Lower leg skin (tissue), 4 donors: ENCODE measurements at regions of chr11 and their contacts with region 1.

Region 1: DNA sequence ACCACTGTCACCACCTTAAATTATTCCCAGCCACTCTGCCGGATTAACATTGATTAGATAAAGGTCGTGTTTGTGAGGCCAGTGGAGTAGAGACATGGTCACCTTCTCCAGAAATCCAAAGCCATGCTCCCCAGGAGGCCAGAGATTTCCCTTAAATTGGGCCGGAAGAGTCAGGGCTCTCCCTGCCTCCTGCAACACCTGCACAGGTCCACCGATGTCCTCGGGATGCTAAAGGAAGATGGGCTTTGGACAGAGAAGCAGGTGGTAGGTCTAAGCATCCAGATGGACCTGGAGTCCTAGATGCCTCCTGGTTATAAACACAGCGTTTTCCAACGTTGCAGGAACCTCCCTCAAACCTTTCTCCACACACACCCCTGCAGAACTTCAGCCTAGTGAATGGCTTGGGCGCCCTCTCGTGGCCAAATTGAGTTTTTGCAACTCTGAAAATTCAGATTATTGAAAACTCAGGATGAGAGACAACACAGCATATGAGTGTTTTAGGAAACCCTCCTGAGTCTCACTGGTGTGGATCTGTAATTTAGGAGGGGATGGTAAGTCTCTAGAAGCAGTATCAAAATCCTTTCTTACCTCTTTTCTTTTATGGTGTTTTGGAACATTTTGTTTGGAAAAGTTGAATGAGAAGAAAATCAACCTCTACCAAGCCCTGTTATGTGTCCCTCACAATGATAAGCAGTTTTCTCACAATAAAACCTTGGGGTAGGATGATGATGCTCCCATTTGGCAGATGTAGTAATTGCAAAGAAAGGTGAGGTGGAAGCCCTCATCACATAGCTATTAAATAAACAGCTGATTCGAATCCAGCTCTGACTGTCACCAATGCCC is 109.6 kb downstream of the RRAS2 start:
- DNase-seq: peak in 1 of 2 donors; percentile 86
- H3K4me3 ChIP-seq: no peak overlapping the region
- CTCF ChIP-seq: peak in 1 of 3 donors; percentile 50
- POLR2A ChIP-seq: no peak

Region 2: GRCh38 chr11:13772223-13773046 is 476.9 kb before region 1 on chr11:
- intact Hi-C with region 1: loop called (anchors 10 kb)
- DNase-seq: no peak
- H3K4me3 ChIP-seq: no peak overlapping the region
- CTCF ChIP-seq: no peak
- POLR2A ChIP-seq: no peak

Region 3: DNA sequence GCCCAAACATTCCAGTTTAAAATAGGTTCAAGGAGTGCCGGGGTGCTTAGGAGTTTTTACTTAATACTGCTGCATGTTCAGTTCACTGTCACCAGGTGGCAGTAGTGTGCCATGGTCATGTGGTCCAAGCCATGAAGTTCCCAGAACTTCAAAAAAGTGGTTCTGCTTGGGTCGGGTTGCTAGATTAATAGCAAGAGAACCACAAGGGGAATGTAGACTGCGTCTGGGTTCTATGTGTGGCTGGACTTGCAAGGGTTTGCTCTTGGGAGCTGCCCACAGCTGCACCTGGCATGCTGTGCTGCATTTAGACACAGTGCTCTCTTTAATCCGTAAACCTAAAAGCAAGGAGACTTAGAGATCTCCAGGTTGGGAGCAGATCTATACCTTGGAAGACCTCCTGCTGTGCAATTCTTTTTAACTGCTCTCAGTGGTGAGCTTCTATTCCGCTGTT is 293.3 kb before region 1 on chr11:
- intact Hi-C with region 1: loop called (anchors 5 kb)
- DNase-seq: peak in 1 of 2 donors; percentile 45
- H3K4me3 ChIP-seq: no peak overlapping the region
- CTCF ChIP-seq: peak in 1 of 3 donors; percentile 32
- POLR2A ChIP-seq: no peak

Region 4: GRCh38 chr11:14212986-14213385 is 36.4 kb before region 1 on chr11:
- intact Hi-C with region 1: no loop called
- DNase-seq: no peak
- H3K4me3 ChIP-seq: no peak overlapping the region
- CTCF ChIP-seq: no peak
- POLR2A ChIP-seq: no peak

Region 5: GRCh38 chr11:16179676-16180075 is 1930.3 kb after region 1 on chr11:
- intact Hi-C with region 1: no loop called
- DNase-seq: no peak
- H3K4me3 ChIP-seq: no peak overlapping the region
- CTCF ChIP-seq: no peak
- POLR2A ChIP-seq: no peak